HEK293 (cell line): ENCODE measurements at regions of chr9 and their contacts with region 1.

Region 1: GRCh38 chr9:17802249-17802857 is 223.5 kb downstream of the SH3GL2 start:
- H3K4me3 ChIP-seq: no peak overlapping the region
- H3K27ac ChIP-seq: no peak overlapping the region
- H3K4me1 ChIP-seq: no peaks in the 10 kb centered on the region
- CTCF ChIP-seq: no peak

Region 2: GRCh38 chr9:17789316-17789715 is 13.0 kb before region 1 on chr9:
- CTCF ChIA-PET with region 1: interaction called, 11 read pairs
- POLR2A ChIA-PET with region 1: no interaction called
- H3K4me3 ChIP-seq: no peak overlapping the region
- H3K27ac ChIP-seq: no peak overlapping the region
- H3K4me1 ChIP-seq: no peaks in the 10 kb centered on the region
- CTCF ChIP-seq: no peak

Region 3: DNA sequence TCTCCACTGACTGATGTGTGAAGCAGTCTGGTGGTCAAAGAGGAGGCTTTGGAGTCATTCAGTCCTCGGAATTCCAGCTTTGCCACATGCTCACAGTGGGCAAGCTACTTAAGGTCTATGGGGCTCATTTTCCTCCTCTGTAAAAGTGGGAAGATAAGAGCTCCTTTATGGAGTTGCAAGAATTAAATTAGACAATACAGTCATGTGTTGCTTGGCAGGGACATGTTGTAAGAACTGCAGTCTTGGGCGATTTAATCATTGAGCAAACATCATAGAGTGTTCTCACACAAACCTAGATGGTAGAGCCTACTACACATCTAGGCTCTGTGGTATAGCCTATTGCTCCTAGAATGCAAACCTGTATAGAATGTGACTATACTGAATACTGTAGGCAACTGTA is 30.5 kb after region 1 on chr9:
- CTCF ChIA-PET with region 1: no interaction called
- POLR2A ChIA-PET with region 1: no interaction called
- H3K4me3 ChIP-seq: no peak overlapping the region
- H3K27ac ChIP-seq: no peak overlapping the region
- H3K4me1 ChIP-seq: no peaks in the 10 kb centered on the region
- CTCF ChIP-seq: no peak

Region 4: DNA sequence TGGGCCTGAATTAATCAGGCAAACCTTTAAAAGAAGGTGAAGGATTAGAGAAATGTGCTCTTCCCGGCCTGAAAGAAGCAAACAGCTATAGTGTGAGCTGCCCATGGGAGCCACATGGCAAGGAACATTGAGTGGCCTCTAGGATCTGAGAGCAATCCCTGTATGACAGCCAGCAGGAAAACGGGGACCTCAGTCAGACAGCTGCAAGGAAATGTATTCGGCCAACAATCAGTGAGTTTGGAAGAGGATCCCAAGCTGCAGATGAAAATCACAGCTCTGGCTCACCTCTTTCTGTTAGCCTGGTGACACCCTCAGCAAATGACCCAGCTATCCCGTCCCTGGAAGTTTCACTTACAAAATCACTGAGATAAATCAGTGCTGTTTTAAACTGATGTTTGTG is 85.7 kb after region 1 on chr9:
- CTCF ChIA-PET with region 1: no interaction called
- POLR2A ChIA-PET with region 1: no interaction called
- H3K4me3 ChIP-seq: no peak overlapping the region
- H3K27ac ChIP-seq: no peak overlapping the region
- H3K4me1 ChIP-seq: no peaks in the 10 kb centered on the region
- CTCF ChIP-seq: no peak

Region 5: GRCh38 chr9:17958363-17958762 is 156.0 kb after region 1 on chr9:
- CTCF ChIA-PET with region 1: no interaction called
- POLR2A ChIA-PET with region 1: no interaction called
- H3K4me3 ChIP-seq: no peak overlapping the region
- H3K27ac ChIP-seq: no peak overlapping the region
- H3K4me1 ChIP-seq: no peaks in the 10 kb centered on the region
- CTCF ChIP-seq: no peak

Region 6: DNA sequence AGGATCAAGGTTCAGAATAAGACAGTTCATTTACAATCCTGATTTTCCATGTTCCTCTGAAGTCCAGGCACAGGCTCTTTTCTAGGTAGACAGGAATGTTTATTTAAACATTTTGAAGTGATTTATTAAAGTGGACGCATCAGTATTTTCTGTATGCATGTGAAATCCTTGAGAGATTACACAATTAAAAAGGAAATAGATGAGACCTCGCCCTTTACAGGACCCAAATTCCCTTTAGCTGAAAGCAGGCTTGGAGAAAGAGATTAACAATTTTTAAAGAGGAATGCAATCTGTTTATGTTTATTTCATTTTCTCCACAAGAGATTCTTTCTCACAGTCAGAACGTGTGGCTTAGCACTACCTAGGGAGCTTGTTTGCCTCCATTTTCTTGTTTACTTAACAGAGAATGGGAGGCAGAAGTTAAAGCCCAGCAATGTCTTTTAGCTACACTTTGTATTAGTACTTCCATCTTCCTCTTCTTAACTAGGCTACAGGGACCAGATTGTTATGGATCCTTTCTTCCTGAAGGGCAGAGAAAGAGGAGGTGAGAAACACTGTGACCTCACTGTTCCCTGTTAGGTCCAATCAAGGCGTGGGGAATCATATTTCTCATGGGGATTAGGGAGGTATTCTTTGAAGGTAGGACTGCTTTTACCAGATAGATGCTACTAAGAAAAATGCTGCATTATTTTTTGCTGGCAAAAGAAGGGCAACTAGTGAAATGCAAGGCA is 192.5 kb after region 1 on chr9:
- CTCF ChIA-PET with region 1: no interaction called
- POLR2A ChIA-PET with region 1: no interaction called
- H3K4me3 ChIP-seq: no peak overlapping the region
- H3K27ac ChIP-seq: no peak overlapping the region
- H3K4me1 ChIP-seq: no peaks in the 10 kb centered on the region
- CTCF ChIP-seq: no peak